ENCODE measurements at regions of chr12 and their contacts with region 1.

Region 1: GRCh38 chr12:1282670-1283335 is 291.8 kb downstream of the ERC1 start:
- DNase-seq: peak; percentile 14 to 21
- ATAC-seq: peak; percentile 55 to 68
- H3K4me3 ChIP-seq: no peak overlapping the region
- H3K27ac ChIP-seq: peak overlapping the region in 2 of 4 donors; percentile 22 to 35
- H3K4me1 ChIP-seq: peaks cover 13 to 15% of the 10 kb centered on the region in 2 donors
- H3K27me3 ChIP-seq: no peaks in the 10 kb centered on the region
- CTCF ChIP-seq: no peak
- POLR2A ChIP-seq: no peak

Region 2: DNA sequence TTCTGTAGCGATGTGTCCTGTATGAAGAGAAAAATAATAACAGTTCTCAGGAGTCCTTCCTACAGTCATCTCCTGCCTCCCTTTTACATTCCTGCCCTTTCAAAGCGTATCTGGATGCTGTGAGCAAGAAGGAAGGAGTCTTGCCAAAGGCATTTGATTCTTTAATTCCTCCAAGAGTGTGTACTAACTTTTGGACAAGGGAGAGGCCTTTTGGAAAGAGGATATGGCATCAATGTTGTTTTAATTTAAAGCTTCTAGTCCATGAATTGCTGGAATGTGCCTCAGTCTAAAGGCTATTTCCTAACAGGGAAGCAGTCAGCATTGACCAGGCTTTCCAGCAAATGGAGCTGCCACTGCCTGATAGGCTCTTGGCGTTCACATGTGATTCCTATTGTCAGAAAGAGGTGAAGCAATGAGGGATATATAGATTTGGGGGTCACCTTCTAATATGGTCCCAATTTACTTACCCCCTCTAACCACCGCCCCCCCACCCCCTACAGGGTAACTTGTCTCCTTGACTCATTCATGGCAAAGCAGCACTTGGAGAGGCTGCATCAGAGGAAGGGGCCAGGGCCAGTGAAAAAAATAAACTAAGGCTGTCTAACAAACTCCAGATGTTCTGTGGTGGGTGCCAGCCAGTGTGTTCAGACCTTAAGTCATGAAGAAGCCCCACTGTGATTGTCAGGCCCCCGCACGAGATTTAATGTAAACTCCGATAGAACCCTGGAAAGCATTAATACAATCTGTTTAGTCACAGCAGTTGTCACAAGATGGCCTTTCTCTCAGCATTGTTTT is 91.3 kb after region 1 on chr12:
- in situ Hi-C with region 1: no loop called
- intact Hi-C with region 1: no loop called
- DNase-seq: no peak
- ATAC-seq: no peak
- H3K4me3 ChIP-seq: no peak overlapping the region
- H3K27ac ChIP-seq: no peak overlapping the region
- H3K4me1 ChIP-seq: peaks cover 3 to 8% of the 10 kb centered on the region in 2 donors
- H3K27me3 ChIP-seq: no peaks in the 10 kb centered on the region
- CTCF ChIP-seq: no peak
- POLR2A ChIP-seq: no peak

Region 3: DNA sequence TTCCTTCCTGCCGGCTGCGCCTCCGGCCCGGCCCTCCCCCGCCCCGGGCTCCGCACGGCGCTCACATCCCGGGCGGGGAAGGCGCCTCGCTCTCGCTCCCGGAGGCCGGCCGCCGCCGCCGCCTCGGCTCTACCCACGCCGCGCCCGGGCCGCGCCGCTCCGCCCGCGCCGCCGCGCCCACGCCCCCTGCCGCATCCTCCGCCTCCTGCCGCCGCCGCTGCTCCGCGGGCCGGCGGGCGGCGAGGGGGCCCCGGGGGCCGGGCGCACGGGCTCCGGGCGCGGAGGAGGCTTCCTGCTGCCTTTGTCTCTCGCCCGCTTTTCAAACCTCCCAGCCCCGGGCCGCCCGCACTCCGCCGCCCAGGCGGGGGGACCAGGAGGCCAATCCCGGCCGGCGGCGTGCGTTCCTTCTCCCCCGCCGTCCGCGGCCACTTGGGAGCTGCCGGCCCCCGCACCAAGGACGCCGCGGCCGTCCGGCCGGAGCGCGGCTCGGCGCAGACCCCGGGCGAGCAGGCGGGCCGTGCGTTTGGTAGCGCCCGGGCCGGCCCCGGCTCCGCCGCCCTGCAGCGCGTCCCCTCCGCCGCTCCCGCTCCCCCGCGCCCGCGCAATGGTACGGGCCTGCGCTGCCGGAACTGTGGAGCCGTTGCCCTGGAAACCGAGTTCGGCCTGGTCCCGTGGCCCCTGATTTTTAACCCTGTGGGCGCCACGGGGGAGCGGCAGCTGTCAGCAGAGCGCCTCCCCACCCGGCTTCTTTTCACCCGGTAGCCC is 311.6 kb after region 1 on chr12 and contains the start of gene FBXL14:
- in situ Hi-C with region 1: loop called in 1 of 4 experiments (anchors 25 kb)
- intact Hi-C with region 1: no loop called
- DNase-seq: peak; percentile 81 to 83
- ATAC-seq: peak; percentile 81 to 83
- H3K4me3 ChIP-seq: peak within 1 kb of the TSS; percentile 78 to 90 (median 86)
- H3K27ac ChIP-seq: peak within 1 kb of the TSS; percentile 83 to 92 (median 91)
- H3K4me1 ChIP-seq: peaks cover 30 to 39% of the 10 kb centered on the region in 2 donors
- H3K27me3 ChIP-seq: no peaks in the 10 kb centered on the region
- CTCF ChIP-seq: peak in 1 of 5 experiments; percentile 18
- POLR2A ChIP-seq: peak; percentile 24 to 55
- total RNA-seq, gene FBXL14: 5.8 to 11.5 (median 7.4) TPM